ENCODE measurements at regions of chr7 and their contacts with region 1.

Region 1: DNA sequence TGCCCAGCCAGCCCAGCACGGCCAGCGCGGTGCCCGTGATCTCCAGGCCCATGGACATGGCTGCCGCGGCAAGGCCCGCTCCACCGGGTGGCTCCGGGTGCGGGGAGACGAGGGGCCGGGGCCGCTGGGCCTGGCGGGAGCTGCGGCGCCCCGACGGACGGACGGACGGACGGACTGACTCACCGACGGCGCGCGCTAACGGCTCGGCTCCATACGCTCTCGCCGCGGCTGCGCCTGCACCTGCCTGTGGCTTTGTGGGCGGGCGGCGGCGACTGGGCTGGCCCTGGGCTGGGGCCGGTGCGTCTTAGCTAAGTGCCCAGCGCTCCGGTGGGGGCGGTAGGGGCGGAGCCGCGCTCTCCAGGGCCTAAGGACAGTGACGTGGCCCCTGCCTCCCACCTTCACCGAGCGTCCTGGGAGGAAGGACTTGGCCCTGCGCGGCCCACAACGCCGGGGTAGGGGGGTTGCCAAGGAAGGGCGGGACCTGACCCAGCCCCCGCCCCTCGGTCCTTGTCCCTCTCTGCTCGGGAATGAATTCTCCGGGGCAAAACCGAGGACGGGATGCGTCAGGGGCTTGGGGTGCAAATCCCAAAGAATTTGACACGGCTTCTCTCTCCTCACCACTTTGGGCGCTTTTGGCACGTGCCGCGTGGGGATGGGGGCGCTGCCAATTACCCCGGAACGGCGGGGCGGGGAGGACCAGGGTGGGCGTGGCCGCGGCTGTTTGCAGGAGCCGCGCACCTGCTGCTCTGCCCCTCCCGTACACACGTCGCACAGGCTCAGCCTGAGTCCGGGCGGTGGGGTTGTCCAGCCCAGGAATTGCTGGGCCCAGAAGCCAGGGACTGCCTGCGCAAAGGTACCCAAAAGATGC is at the start of gene CLDN3:
- DNase-seq: peak; percentile 95
- H3K4me3 ChIP-seq: peak within 1 kb of the TSS; percentile 58
- H3K27ac ChIP-seq: peak within 1 kb of the TSS; percentile 72
- H3K4me1 ChIP-seq: no peaks in the 10 kb centered on the region
- H3K27me3 ChIP-seq: peaks cover 6% of the 10 kb centered on the region
- CTCF ChIP-seq: no peak
- total RNA-seq, gene CLDN3: 599 to 634 TPM

Region 2: DNA sequence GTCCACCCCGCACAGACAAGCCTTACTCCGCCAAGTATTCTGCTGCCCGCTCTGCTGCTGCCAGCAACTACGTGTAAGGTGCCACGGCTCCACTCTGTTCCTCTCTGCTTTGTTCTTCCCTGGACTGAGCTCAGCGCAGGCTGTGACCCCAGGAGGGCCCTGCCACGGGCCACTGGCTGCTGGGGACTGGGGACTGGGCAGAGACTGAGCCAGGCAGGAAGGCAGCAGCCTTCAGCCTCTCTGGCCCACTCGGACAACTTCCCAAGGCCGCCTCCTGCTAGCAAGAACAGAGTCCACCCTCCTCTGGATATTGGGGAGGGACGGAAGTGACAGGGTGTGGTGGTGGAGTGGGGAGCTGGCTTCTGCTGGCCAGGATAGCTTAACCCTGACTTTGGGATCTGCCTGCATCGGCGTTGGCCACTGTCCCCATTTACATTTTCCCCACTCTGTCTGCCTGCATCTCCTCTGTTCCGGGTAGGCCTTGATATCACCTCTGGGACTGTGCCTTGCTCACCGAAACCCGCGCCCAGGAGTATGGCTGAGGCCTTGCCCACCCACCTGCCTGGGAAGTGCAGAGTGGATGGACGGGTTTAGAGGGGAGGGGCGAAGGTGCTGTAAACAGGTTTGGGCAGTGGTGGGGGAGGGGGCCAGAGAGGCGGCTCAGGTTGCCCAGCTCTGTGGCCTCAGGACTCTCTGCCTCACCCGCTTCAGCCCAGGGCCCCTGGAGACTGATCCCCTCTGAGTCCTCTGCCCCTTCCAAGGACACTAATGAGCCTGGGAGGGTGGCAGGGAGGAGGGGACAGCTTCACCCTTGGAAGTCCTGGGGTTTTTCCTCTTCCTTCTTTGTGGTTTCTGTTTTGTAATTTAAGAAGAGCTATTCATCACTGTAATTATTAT is 61.8 kb after region 1 on chr7:
- intact Hi-C with region 1: loop called (anchors 2 kb)
- DNase-seq: peak; percentile 89
- H3K4me3 ChIP-seq: peak overlapping the region; percentile 50
- H3K27ac ChIP-seq: peak overlapping the region; percentile 85
- H3K4me1 ChIP-seq: peaks cover 3% of the 10 kb centered on the region
- H3K27me3 ChIP-seq: no peaks in the 10 kb centered on the region
- CTCF ChIP-seq: no peak

Measured in colonic mucosa (tissue), 4 donors.